ENCODE measurements at regions of chr2 and their contacts with region 1.

Region 1: GRCh38 chr2:33321876-33322483 is 154.5 kb upstream of the RASGRP3 start:
- DNase-seq: no peak
- ATAC-seq: no peak
- H3K4me3 Mint-ChIP-seq: no peak overlapping the region
- H3K27ac Mint-ChIP-seq: no peak overlapping the region
- H3K4me1 Mint-ChIP-seq: peaks cover 21% of the 10 kb centered on the region
- H3K27me3 Mint-ChIP-seq: no peaks in the 10 kb centered on the region
- CTCF ChIP-seq: no peak

Region 2: GRCh38 chr2:33336036-33336625 is 14.2 kb after region 1 on chr2:
- CTCF ChIA-PET with region 1: no interaction called
- POLR2A ChIA-PET with region 1: no interaction called
- intact Hi-C with region 1: loop called (anchors 2 kb)
- DNase-seq: no peak
- ATAC-seq: peak; percentile 64
- H3K4me3 Mint-ChIP-seq: peak overlapping the region; percentile 50
- H3K27ac Mint-ChIP-seq: peak overlapping the region; percentile 51
- H3K4me1 Mint-ChIP-seq: peaks cover 12% of the 10 kb centered on the region
- H3K27me3 Mint-ChIP-seq: peaks cover 4% of the 10 kb centered on the region
- CTCF ChIP-seq: no peak

Region 3: DNA sequence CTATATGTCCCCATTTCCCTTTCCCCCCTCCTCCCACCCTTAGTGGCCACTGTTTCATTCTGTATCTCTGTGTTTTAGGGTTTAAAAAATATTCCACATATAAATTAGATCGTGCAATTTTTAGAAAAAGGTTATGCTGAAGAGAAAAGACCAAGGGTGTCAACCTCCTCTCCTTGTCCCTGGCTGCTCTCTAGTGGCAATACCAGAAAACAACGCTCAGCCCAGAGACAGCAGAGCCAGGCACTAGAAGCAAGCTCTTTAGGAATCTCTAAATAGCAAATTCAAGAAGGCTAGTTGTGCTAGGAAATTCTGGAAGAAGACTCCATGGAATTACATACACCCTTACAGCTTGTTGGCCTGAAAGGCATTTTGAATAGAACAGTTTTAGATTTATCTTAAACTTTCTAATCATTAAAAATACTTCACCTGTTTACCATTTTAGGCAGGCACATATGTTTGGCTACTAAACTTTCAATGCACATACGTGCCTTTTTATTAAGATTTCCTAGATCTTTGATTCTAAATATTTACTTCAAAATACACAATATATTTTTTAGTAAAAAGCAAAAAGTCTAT is 119.3 kb after region 1 on chr2:
- CTCF ChIA-PET with region 1: no interaction called
- POLR2A ChIA-PET with region 1: no interaction called
- intact Hi-C with region 1: no loop called
- DNase-seq: no peak
- ATAC-seq: peak; percentile 47
- H3K4me3 Mint-ChIP-seq: no peak overlapping the region
- H3K27ac Mint-ChIP-seq: no peak overlapping the region
- H3K4me1 Mint-ChIP-seq: peaks cover 6% of the 10 kb centered on the region
- H3K27me3 Mint-ChIP-seq: no peaks in the 10 kb centered on the region
- CTCF ChIP-seq: no peak